Activated naive CD4-positive, alpha-beta T cell treated with anti-CD3 and anti-CD28 coated beads for 36 hours (primary cell): ENCODE measurements at regions of chr13 and their contacts with region 1.

Region 1: GRCh38 chr13:40777166-40777808 is 6.3 kb upstream of the MRPS31 start:
- DNase-seq: peak; percentile 48
- H3K4me3 Mint-ChIP-seq: peak overlapping the region; percentile 77
- H3K27ac Mint-ChIP-seq: peak overlapping the region; percentile 99
- H3K4me1 Mint-ChIP-seq: peaks cover 25% of the 10 kb centered on the region
- H3K27me3 Mint-ChIP-seq: no peaks in the 10 kb centered on the region

Region 2: GRCh38 chr13:39765801-39766463 is 1011.4 kb before region 1 on chr13:
- CTCF ChIA-PET with region 1: interaction called, 3 read pairs
- intact Hi-C with region 1: loop called (anchors 1 kb)
- DNase-seq: peak; percentile 70
- H3K4me3 Mint-ChIP-seq: no peak overlapping the region
- H3K27ac Mint-ChIP-seq: no peak overlapping the region
- H3K4me1 Mint-ChIP-seq: no peaks in the 10 kb centered on the region
- H3K27me3 Mint-ChIP-seq: no peaks in the 10 kb centered on the region

Region 3: GRCh38 chr13:40026174-40026585 is 751.1 kb before region 1 on chr13:
- CTCF ChIA-PET with region 1: no interaction called
- intact Hi-C with region 1: loop called (anchors 5 kb)
- DNase-seq: peak; percentile 82
- H3K4me3 Mint-ChIP-seq: no peak overlapping the region
- H3K27ac Mint-ChIP-seq: no peak overlapping the region
- H3K4me1 Mint-ChIP-seq: peaks cover 33% of the 10 kb centered on the region
- H3K27me3 Mint-ChIP-seq: peaks cover 2% of the 10 kb centered on the region

Region 4: GRCh38 chr13:40206241-40207000 is 570.9 kb before region 1 on chr13:
- CTCF ChIA-PET with region 1: no interaction called
- intact Hi-C with region 1: loop called (anchors 2 kb)
- DNase-seq: peak; percentile 74
- H3K4me3 Mint-ChIP-seq: peak overlapping the region; percentile 64
- H3K27ac Mint-ChIP-seq: peak overlapping the region; percentile 100
- H3K4me1 Mint-ChIP-seq: peaks cover 73% of the 10 kb centered on the region
- H3K27me3 Mint-ChIP-seq: no peaks in the 10 kb centered on the region

Region 5: GRCh38 chr13:40666045-40666904 is 111.0 kb before region 1 on chr13 and contains the start of gene FOXO1:
- CTCF ChIA-PET with region 1: interaction called, 5 read pairs
- intact Hi-C with region 1: loop called (anchors 1 kb)
- DNase-seq: peak; percentile 84
- H3K4me3 Mint-ChIP-seq: peak within 1 kb of the TSS; percentile 92
- H3K27ac Mint-ChIP-seq: peak within 1 kb of the TSS; percentile 94
- H3K4me1 Mint-ChIP-seq: peaks cover 40% of the 10 kb centered on the region
- H3K27me3 Mint-ChIP-seq: no peaks in the 10 kb centered on the region
- total RNA-seq, gene FOXO1: 30.9 to 32.1 TPM

Region 6: DNA sequence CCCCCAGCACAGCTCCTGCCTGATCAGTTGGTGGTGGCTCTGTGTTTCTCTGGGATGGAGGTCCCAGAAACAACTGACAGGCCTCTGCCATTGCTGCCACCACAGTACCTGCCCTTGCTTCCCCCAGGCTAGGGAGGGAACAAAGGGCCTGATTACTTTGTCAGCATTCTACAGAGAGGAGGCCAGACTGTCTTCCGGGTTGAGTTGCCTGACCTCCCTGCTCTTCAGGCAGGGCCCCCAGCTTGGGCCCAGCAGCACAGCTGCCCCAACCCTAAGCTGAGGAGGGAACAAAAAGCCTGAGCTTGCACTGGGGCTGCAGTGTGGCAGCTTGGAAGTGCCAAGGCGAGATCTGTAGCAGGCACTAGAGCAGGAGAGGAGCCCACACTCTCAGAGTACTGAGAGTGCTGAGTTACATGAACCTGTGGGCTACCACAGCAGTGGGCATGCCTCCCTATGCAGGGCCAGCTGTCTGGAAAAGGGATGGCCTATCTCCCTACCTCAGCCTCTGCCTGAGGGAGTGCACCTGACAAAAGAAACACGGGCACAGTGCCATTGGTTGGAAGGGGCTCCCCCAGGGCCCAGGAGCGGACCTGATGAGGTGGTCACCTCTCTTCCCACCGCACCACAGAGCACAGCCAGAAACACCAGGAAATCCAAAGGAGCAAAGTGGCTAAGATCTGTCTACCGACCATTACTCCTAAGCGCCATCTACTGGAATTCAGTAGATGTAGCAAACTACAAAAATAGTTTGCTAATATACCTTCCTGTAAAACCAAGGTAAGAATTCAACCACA is 36.6 kb after region 1 on chr13:
- CTCF ChIA-PET with region 1: no interaction called
- intact Hi-C with region 1: loop called (anchors 1 kb)
- DNase-seq: no peak
- H3K4me3 Mint-ChIP-seq: no peak overlapping the region
- H3K27ac Mint-ChIP-seq: no peak overlapping the region
- H3K4me1 Mint-ChIP-seq: no peaks in the 10 kb centered on the region
- H3K27me3 Mint-ChIP-seq: no peaks in the 10 kb centered on the region